ENCODE measurements at regions of chr10 and their contacts with region 1.

Region 1: GRCh38 chr10:21265621-21266020 is 259.9 kb downstream of the SKIDA1 start:
- DNase-seq: peak in 1 of 4 donors; percentile 39
- ATAC-seq: peak; percentile 36
- H3K4me3 ChIP-seq: no peak overlapping the region
- H3K27ac ChIP-seq: no peak overlapping the region
- H3K4me1 ChIP-seq: peaks cover 0 to 3% of the 10 kb centered on the region in 2 donors
- H3K27me3 ChIP-seq: no peaks in the 10 kb centered on the region
- CTCF ChIP-seq: no peak

Region 2: GRCh38 chr10:20776384-20777118 is 489.1 kb before region 1 on chr10:
- intact Hi-C with region 1: no loop called
- DNase-seq: no peak
- ATAC-seq: no peak
- H3K4me3 ChIP-seq: no peak overlapping the region
- H3K27ac ChIP-seq: no peak overlapping the region
- H3K4me1 ChIP-seq: no peaks in the 10 kb centered on the region
- H3K27me3 ChIP-seq: no peaks in the 10 kb centered on the region
- CTCF ChIP-seq: no peak

Region 3: DNA sequence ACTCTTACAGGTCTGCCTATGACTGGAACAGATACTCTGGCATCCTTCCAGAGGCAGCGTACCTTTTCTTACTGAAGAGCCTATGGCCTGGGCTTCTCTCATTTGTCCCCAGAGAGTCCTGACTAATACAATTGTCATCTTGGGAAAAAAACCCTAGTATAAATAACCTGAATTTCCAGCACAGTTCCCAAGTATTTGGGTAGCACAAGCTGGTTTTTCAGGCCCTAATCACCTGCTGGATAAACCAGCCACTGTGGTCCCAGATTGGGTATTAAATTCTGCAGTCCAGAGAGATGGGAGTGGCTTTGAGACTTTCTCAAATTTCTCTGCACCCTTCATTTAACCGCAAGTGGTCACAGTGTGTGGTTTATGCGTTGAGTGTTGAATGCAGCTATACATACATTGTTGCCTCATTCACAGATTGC is 181.7 kb before region 1 on chr10:
- intact Hi-C with region 1: loop called in 1 of 2 experiments (anchors 5 kb)
- DNase-seq: no peak
- ATAC-seq: peak; percentile 43
- H3K4me3 ChIP-seq: no peak overlapping the region
- H3K27ac ChIP-seq: no peak overlapping the region
- H3K4me1 ChIP-seq: peaks cover 0 to 5% of the 10 kb centered on the region in 2 donors
- H3K27me3 ChIP-seq: no peaks in the 10 kb centered on the region
- CTCF ChIP-seq: no peak

Region 4: GRCh38 chr10:21385996-21386610 is 120.5 kb after region 1 on chr10:
- intact Hi-C with region 1: no loop called
- DNase-seq: no peak
- ATAC-seq: no peak
- H3K4me3 ChIP-seq: no peak overlapping the region
- H3K27ac ChIP-seq: no peak overlapping the region
- H3K4me1 ChIP-seq: no peaks in the 10 kb centered on the region
- H3K27me3 ChIP-seq: no peaks in the 10 kb centered on the region
- CTCF ChIP-seq: no peak

Region 5: DNA sequence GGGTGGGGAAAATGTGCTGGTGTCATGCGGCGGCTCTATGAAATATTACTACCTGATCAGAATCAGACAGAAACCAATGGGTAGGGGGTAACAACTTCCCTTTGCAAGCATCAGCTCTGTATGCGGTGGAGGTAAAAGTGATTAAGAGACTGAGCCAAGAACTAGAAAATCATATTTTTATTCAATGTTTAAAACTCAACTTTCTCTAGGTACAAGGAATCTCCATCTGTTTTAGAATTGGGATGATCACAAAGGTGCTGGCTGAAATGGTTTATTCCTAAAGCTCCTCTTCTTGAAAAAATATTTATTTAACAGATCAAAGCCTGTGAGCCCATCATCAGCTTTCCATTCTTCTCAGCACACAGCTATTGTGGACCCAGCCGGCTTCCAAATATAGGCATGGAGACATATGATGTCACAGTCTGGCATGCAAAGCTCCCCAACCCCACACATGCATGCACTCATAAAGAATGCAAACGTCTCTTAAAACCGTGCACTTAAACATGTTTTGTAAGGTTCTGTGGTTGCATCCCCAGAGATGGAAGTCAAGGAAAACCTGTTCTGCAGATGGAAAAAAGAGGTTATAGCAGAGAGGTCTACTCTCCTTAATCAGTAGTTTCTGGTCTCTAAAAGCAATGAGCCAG is 133.9 kb after region 1 on chr10:
- intact Hi-C with region 1: no loop called
- DNase-seq: peak in 2 of 4 donors; percentile 49 to 71
- ATAC-seq: peak; percentile 45
- H3K4me3 ChIP-seq: no peak overlapping the region
- H3K27ac ChIP-seq: no peak overlapping the region
- H3K4me1 ChIP-seq: no peaks in the 10 kb centered on the region
- H3K27me3 ChIP-seq: no peaks in the 10 kb centered on the region
- CTCF ChIP-seq: no peak

Measured in left lung (tissue), 14 donors.